Naive thymus-derived CD4-positive, alpha-beta T cell (primary cell): ENCODE measurements at regions of chr14 and their contacts with region 1.

Region 1: GRCh38 chr14:49959822-49960408 is 67.0 kb downstream of the ARF6 start:
- DNase-seq: peak in 7 of 9 donors; percentile 19 to 51 (median 35)
- ATAC-seq: peak; percentile 70
- H3K4me3 ChIP-seq: no peak overlapping the region
- H3K4me3 Mint-ChIP-seq: peak overlapping the region in 9 of 10 donors; percentile 13 to 72 (median 59)
- H3K27ac ChIP-seq: peak overlapping the region; percentile 32
- H3K27ac Mint-ChIP-seq: peak overlapping the region; percentile 57 to 85 (median 79)
- H3K4me1 ChIP-seq: peaks cover 0 to 17% of the 10 kb centered on the region in 2 donors
- H3K4me1 Mint-ChIP-seq: peaks cover 13 to 43% (median 31%) of the 10 kb centered on the region in 7 donors
- H3K27me3 ChIP-seq: no peaks in the 10 kb centered on the region
- H3K27me3 Mint-ChIP-seq: no peaks in the 10 kb centered on the region

Region 2: GRCh38 chr14:49946320-49947141 is 13.4 kb before region 1 on chr14:
- CTCF ChIA-PET with region 1: interaction called, 4 read pairs
- POLR2A ChIA-PET with region 1: interaction called, 5 read pairs
- intact Hi-C with region 1: loop called in 1 of 2 experiments (anchors 1 kb)
- DNase-seq: peak in 7 of 9 donors; percentile 30 to 55 (median 43)
- ATAC-seq: peak; percentile 71
- H3K4me3 ChIP-seq: peak overlapping the region; percentile 36
- H3K4me3 Mint-ChIP-seq: peak overlapping the region; percentile 43 to 81 (median 74)
- H3K27ac ChIP-seq: peak overlapping the region; percentile 66
- H3K27ac Mint-ChIP-seq: peak overlapping the region; percentile 82 to 98 (median 94)
- H3K4me1 ChIP-seq: peaks cover 28 to 46% of the 10 kb centered on the region in 2 donors
- H3K4me1 Mint-ChIP-seq: peaks cover 26 to 86% (median 77%) of the 10 kb centered on the region in 7 donors
- H3K27me3 ChIP-seq: no peaks in the 10 kb centered on the region
- H3K27me3 Mint-ChIP-seq: no peaks in the 10 kb centered on the region

Region 3: DNA sequence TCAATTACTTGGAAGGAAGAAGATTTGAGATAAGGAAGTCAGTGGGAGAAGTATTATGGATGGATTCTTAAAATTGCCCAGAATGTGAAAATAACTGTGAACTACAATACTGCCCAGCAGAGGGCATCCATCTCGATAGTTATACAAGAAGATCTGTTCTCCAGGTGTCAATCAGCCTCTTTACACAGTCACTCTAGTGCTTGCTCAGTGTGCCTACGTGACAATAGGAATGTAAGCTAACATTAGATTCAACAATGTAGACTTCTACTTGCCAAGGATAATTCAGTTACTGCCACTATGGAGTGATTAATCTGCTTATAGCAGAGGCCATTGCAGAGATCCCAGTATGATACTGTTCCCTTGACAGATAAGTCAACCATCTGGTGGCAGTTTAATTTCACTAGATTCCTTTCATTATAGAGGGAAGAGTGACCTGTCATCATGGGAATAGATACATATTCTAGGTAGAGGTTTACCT is 583.1 kb after region 1 on chr14:
- CTCF ChIA-PET with region 1: no interaction called
- POLR2A ChIA-PET with region 1: no interaction called
- intact Hi-C with region 1: no loop called
- DNase-seq: peak in 7 of 9 donors; percentile 5 to 51 (median 38)
- ATAC-seq: peak; percentile 84
- H3K4me3 ChIP-seq: no peak overlapping the region
- H3K4me3 Mint-ChIP-seq: no peak overlapping the region
- H3K27ac ChIP-seq: no peak overlapping the region
- H3K27ac Mint-ChIP-seq: no peak overlapping the region
- H3K4me1 ChIP-seq: no peaks in the 10 kb centered on the region
- H3K4me1 Mint-ChIP-seq: peaks cover 5 to 13% (median 12%) of the 10 kb centered on the region in 7 donors
- H3K27me3 ChIP-seq: no peaks in the 10 kb centered on the region
- H3K27me3 Mint-ChIP-seq: peaks cover 0 to 7% (median 0%) of the 10 kb centered on the region in 5 donors